Mammary epithelial cell (primary cell): ENCODE measurements at regions of chr1 and their contacts with region 1.

Region 1: GRCh38 chr1:151311589-151312331 is 15.5 kb downstream of the PI4KB start:
- DNase-seq: peak; percentile 99
- H3K4me3 ChIP-seq: no peak overlapping the region
- H3K27ac ChIP-seq: peak overlapping the region; percentile 69
- H3K4me1 ChIP-seq: peaks cover 31% of the 10 kb centered on the region
- H3K27me3 ChIP-seq: no peaks in the 10 kb centered on the region
- CTCF ChIP-seq: no peak

Region 2: DNA sequence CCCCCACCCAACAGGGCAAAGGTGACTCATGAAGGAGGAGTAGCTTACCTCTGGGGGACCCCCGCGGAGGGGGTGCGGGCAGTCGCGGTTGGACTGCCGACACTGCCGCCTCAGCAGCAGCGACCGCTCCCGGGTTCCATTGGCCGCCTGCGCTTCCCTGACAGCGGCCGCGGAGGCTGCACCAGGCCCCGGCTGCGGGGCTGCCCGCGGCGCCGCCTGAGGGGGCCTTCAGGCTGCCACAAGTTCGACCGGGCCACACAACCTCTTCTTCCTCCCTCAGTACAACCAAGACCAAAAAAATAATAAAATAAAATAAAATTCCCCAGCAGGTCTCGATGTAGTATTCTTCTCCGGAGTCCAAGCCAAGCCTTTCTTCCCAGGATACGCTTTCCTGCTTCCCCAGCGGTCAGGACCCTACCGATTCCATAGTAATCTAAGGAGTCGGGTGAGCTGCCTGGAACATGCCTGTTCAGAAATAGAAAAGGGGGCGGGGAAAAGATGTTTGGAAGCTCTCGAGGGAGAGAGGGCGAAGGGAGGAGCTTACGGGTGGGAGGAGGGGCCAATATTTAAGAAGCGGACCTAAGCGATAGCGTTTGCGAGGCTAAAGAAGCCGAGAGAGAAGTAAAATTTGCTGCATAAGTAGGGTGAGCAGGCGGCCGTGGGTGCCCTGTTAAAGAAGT is 15.6 kb after region 1 on chr1 and contains the start of gene PI4KB:
- CTCF ChIA-PET with region 1: no interaction called
- dilution Hi-C with region 1: no loop called
- in situ Hi-C with region 1: no loop called
- intact Hi-C with region 1: loop called (anchors 1 kb)
- DNase-seq: peak; percentile 97
- H3K4me3 ChIP-seq: peak within 1 kb of the TSS; percentile 75 to 83 (median 79)
- H3K27ac ChIP-seq: peak within 1 kb of the TSS; percentile 93
- H3K4me1 ChIP-seq: peaks cover 15% of the 10 kb centered on the region
- H3K27me3 ChIP-seq: no peaks in the 10 kb centered on the region
- CTCF ChIP-seq: no peak
- total RNA-seq, gene PI4KB: 46.7 to 58.3 TPM

Region 3: GRCh38 chr1:151346769-151347522 is 35.2 kb after region 1 on chr1 and contains the start of gene RFX5:
- CTCF ChIA-PET with region 1: no interaction called
- dilution Hi-C with region 1: no loop called
- in situ Hi-C with region 1: loop called in 1 of 2 experiments (anchors 5 kb)
- intact Hi-C with region 1: no loop called
- DNase-seq: peak; percentile 99
- H3K4me3 ChIP-seq: peak within 1 kb of the TSS; percentile 60 to 93 (median 78)
- H3K27ac ChIP-seq: peak within 1 kb of the TSS; percentile 100
- H3K4me1 ChIP-seq: peaks cover 15% of the 10 kb centered on the region
- H3K27me3 ChIP-seq: no peaks in the 10 kb centered on the region
- CTCF ChIP-seq: no peak
- total RNA-seq, gene RFX5: 45.5 to 45.9 TPM

Region 4: DNA sequence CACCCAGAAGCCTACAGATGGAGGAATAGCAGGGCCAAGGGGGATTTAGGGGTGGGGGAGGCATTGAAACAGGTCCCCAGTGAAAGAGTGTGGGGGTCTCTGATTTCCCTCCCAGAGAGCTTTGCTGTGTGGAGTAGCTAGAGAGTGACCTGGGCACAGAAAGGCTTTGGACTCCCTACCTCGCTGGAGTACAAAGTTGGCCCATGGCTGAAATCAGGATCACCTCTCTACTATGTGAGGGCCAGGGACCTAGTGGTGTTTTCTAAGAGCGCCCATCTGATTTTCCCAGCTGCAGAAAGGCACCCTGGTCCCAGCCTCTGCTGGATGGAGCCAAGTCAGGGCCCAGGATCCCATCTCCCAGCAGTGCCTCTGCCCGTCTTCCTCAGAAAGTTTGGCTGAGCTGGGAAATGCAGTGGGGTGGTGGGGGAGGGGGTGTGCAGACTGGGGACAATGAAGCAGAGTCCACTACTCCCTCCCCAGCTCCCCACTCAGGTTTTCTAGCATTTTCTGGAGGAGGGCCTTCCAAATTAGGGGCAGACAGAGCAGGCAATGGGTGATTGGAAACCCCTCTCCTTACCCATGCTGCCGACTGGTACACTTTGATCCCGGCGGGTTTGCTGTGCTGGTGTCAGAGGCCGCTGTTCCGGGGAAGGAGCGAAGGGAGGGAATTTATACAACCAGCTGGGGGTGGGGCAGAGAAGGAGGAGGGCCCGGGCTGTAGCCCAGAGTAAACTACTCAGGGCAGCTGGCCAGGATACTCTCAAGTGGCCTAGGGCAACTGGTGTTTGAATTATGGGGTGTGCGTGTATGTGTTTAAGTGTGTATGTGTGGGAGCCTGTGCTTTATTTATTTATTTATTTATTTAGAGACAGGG is 60.5 kb after region 1 on chr1 and contains the start of gene SELENBP1:
- CTCF ChIA-PET with region 1: no interaction called
- dilution Hi-C with region 1: no loop called
- in situ Hi-C with region 1: no loop called
- intact Hi-C with region 1: no loop called
- DNase-seq: no peak
- H3K4me3 ChIP-seq: no peak within 1 kb of the TSS
- H3K27ac ChIP-seq: no peak within 1 kb of the TSS
- H3K4me1 ChIP-seq: no peaks in the 10 kb centered on the region
- H3K27me3 ChIP-seq: peaks cover 2% of the 10 kb centered on the region
- CTCF ChIP-seq: no peak
- total RNA-seq, gene SELENBP1: 2.8 TPM in 1 of 2 donors, not detected in the other

Region 5: DNA sequence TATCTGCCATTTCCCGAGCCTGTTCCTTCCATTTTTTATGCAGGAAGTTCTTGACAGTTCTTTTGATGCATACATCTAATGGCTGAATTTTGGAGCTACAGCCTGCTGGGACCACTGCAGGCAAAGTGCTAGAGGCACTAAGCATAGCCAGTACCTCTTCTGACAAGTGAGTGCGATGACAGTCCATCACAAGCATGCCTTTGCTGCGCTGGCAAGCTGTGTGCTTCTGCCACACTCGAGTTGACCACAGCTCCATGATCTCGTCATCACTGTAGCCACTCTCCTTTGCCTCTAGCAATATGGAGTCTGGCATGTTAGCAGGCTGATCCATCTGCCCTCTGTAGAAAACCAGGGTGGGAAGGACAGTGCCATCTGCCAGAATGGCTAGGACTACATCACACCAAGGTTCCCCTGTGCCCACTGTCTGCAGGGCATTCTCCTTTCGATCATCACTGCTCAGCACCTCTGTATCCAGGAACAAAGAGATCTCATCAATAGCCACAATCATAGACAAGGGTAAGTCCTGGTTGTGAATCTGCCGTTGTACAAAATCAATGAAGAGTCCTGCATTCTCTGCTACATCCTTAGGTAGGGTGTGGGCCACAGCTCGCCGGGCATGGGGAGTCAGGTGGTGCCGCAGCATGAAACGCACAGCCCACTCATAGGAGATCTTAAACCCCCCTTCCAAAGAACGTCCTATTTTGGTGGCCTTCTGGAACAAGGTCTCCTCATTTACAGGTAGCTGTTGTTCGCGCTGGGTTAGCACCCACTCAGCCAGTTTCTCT is 93.6 kb after region 1 on chr1:
- CTCF ChIA-PET with region 1: no interaction called
- dilution Hi-C with region 1: loop called (anchors 5 kb)
- in situ Hi-C with region 1: no loop called
- intact Hi-C with region 1: no loop called
- DNase-seq: no peak
- H3K4me3 ChIP-seq: no peak overlapping the region
- H3K27ac ChIP-seq: no peak overlapping the region
- H3K4me1 ChIP-seq: peaks cover 12% of the 10 kb centered on the region
- H3K27me3 ChIP-seq: no peaks in the 10 kb centered on the region
- CTCF ChIP-seq: no peak